GM13976 (cell line): ENCODE measurements at regions of chr20 and their contacts with region 1.

Region 1: DNA sequence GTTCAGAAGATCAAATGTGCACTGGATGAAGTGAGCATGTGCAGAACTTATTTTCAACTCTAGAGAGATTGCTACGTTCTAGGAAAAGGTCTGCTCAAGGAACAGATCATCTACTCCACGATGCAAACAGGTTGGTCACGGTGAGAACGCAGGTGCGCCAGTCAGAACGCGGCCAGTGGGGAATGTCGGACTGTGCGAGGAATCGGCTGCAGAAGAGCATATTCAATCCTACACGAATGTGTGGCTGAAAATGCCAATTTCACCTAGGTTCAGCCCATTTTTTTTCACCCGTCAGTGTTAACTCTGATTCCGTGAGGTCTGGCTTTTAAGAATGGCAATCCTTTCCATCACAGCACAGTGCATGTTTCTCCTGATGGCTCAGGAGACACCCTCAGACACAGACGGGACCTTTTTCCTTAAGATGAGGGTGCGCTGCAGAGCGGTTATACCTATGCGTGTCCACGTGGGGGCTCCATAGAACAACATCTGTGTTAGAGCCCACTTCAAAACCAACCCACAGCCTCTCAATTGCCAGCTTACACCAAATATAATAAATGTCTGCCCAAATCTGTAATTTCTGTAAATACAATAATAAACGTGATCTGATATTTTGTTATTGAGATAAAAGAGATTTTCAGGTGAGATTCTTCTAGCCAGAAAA is 250.4 kb downstream of the FOXA2 start:
- DNase-seq: peak; percentile 66
- CTCF ChIP-seq: peak; percentile 56

Region 2: DNA sequence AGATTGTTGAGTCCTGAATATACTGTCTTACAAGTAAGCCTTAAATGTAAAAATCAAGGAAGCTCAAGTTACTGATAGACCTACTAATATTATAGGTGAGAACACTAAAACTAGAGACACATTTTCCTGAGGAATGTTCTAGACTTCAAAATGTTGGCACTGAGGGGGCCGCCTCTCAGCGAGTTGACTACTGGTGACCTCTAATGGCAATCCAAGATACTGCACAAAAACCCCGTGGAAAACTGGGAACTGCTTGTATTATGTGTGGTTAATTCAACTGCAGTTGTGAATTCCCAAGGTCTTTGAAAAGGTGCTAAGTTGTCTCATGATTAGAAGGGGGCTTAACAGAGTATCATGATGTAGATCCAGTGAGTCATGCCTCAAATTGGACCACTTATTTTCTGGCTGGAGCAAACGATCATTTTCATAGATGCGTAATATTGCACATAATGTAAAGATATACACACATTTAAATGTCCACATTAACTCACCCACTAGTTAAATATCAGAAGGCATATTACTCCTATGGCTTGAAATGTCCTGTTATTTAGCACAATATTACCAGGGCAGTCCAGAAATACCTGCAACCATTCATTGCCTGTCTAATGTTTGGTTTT is 85.9 kb before region 1 on chr20:
- in situ Hi-C with region 1: no loop called
- DNase-seq: peak; percentile 18
- CTCF ChIP-seq: peak; percentile 29

Region 3: GRCh38 chr20:22586645-22587310 is 252.8 kb after region 1 on chr20:
- in situ Hi-C with region 1: loop called (anchors 10 kb)
- DNase-seq: peak; percentile 70
- CTCF ChIP-seq: peak; percentile 49

Region 4: GRCh38 chr20:22684072-22684762 is 350.2 kb after region 1 on chr20:
- in situ Hi-C with region 1: loop called (anchors 10 kb)
- DNase-seq: peak; percentile 71
- CTCF ChIP-seq: peak; percentile 79

Region 5: GRCh38 chr20:22744341-22745193 is 410.6 kb after region 1 on chr20:
- in situ Hi-C with region 1: no loop called
- DNase-seq: no peak
- CTCF ChIP-seq: no peak